Naive thymus-derived CD4-positive, alpha-beta T cell (primary cell): ENCODE measurements at regions of chr12 and their contacts with region 1.

Region 1: GRCh38 chr12:76519538-76519937 is 40.0 kb downstream of the OSBPL8 start:
- DNase-seq: peak in 1 of 9 donors; percentile 4
- ATAC-seq: peak; percentile 54
- H3K4me3 ChIP-seq: no peak overlapping the region
- H3K4me3 Mint-ChIP-seq: peak overlapping the region in 7 of 10 donors; percentile 2 to 43 (median 14)
- H3K27ac ChIP-seq: no peak overlapping the region
- H3K27ac Mint-ChIP-seq: peak overlapping the region in 5 of 9 donors; percentile 1 to 76 (median 40)
- H3K4me1 ChIP-seq: no peaks in the 10 kb centered on the region
- H3K4me1 Mint-ChIP-seq: peaks cover 36 to 87% (median 67%) of the 10 kb centered on the region in 7 donors
- H3K27me3 ChIP-seq: no peaks in the 10 kb centered on the region
- H3K27me3 Mint-ChIP-seq: no peaks in the 10 kb centered on the region

Region 2: DNA sequence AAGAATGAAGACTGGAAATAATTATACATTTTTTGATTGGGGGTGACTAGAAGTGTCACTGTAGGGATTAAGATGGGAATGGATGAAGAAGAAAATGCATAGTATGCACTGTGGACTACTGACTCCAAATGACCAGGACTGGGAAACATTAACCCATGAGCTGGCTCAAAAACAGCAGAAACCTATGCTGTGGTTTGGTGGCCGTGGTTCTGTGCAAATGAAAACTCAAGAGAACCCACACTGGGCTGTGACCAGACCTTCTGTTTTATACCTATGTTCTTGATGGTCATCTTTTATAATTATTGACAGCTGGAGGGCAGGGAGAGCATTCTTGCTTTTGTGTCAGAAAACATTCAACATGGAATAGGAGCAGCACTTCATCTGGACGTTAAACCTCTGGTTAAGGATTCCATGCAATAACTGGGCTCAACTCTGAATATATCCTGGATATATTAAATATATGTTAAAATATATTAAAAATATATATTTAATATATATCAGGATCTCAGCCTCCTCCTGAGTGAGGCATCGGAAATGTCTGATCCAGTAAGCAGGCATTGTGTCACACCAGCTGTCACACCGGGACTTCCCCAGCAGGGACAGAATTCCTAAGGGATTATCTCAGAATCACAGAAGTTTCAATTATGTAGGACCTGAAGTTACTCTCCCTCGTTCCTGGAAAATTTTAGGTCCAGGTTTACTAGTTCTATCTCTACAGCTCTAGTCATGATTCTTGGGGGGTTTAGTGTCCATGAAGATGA is 219.8 kb before region 1 on chr12:
- CTCF ChIA-PET with region 1: no interaction called
- POLR2A ChIA-PET with region 1: no interaction called
- intact Hi-C with region 1: no loop called
- DNase-seq: no peak
- ATAC-seq: no peak
- H3K4me3 ChIP-seq: no peak overlapping the region
- H3K4me3 Mint-ChIP-seq: no peak overlapping the region
- H3K27ac ChIP-seq: no peak overlapping the region
- H3K27ac Mint-ChIP-seq: no peak overlapping the region
- H3K4me1 ChIP-seq: no peaks in the 10 kb centered on the region
- H3K4me1 Mint-ChIP-seq: no peaks in the 10 kb centered on the region
- H3K27me3 ChIP-seq: no peaks in the 10 kb centered on the region
- H3K27me3 Mint-ChIP-seq: peaks cover 0 to 14% (median 4%) of the 10 kb centered on the region in 5 donors

Region 3: DNA sequence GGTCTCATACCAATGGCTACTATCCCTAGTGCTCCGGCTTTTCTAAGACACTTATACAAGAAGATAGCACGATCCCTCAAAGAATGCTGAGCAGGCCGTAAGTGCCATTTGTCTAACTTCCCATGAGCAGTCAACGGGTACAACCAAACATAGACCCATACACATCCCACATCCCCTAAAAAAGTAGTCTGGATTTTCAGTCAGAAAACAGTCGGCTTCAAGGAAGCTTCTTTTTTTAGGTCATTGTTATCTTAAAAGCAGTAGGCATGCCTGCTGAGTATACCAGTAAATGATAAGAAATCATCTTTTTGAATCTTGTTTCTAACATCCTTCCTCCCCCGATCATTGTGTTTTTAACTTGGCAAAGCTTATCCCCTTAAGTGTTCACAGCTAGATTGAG is 20.2 kb after region 1 on chr12:
- CTCF ChIA-PET with region 1: no interaction called
- POLR2A ChIA-PET with region 1: no interaction called
- intact Hi-C with region 1: loop called in 1 of 2 experiments (anchors 2 kb)
- DNase-seq: no peak
- ATAC-seq: no peak
- H3K4me3 ChIP-seq: no peak overlapping the region
- H3K4me3 Mint-ChIP-seq: peak overlapping the region in 7 of 10 donors; percentile 18 to 57 (median 50)
- H3K27ac ChIP-seq: no peak overlapping the region
- H3K27ac Mint-ChIP-seq: peak overlapping the region in 5 of 9 donors; percentile 31 to 78 (median 34)
- H3K4me1 ChIP-seq: peaks cover 14 to 17% of the 10 kb centered on the region in 2 donors
- H3K4me1 Mint-ChIP-seq: peaks cover 26 to 79% (median 61%) of the 10 kb centered on the region in 7 donors
- H3K27me3 ChIP-seq: no peaks in the 10 kb centered on the region
- H3K27me3 Mint-ChIP-seq: no peaks in the 10 kb centered on the region